H1 (cell line): ENCODE measurements at regions of chr7 and their contacts with region 1.

Region 1: DNA sequence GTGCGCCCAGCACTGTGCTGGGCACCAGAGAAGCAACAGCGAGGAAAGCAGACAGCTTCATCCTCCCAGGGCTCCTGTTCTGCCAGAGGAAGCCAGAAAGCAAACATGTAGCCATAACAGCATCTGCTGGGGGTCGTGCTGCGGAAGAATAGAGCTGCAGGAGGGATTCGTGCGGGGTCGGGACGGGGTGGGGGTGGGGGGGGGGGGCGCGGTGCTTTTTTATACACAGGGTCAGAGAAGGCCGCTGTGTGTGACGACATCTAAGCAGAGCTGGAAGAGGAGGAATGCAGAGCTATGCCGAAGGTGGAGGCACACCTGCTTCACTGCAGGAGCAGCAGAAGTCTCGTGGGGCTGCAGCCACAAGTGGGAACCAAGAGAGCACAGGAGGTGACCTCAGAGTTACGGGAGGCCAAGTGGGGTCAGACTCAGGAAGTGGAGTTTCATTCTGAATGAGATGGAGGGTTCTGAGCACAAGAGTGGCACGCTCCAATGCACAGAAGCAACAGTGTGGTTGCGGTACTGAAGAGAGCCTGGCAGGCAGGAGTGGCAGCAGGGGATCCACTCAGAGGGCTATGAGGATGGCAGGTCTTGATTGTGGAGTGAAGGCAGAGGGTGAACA is 11.1 kb downstream of the PKD1L1 start:
- DNase-seq: no peak
- H3K4me3 ChIP-seq: no peak overlapping the region
- H3K27ac ChIP-seq: no peak overlapping the region
- H3K4me1 ChIP-seq: peaks cover 0 to 9% (median 5%) of the 10 kb centered on the region in 4 experiments; a peak in 6 of 7 replicates
- H3K27me3 ChIP-seq: no peaks in the 10 kb centered on the region
- CTCF ChIP-seq: no peak
- EP300 ChIP-seq: no peak
- POLR2A ChIP-seq: no peak
- RAD21 ChIP-seq: no peak

Region 2: DNA sequence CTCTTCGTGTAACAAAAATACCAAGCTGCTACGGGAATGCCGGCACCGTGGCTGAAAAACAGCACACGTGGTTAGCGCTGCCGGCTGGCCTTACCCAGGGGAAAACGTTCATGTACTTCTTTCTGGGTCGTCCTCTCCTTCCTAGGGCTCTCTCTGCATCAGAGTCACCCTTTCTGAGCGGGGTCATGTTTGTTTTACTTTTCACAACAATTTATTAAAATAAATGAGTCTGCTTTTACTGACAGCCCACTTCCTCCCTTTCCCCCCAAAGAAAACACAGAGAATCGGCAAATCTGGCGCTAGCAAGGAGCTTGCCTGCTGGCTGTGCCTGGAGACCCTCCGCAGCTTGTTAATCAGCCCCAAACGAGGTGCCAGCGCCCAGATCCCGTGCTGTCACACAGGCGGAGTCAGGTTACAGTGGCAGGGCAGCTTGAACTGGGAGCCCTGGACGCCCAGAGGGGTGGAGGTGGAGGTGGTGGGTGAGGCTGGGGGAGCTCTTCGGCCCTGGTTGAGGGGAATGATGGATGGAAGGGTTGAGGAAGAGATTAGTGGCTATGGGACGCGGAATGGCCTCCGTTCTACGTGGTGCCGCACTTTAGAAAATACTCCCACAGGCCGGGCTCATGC is 193.1 kb before region 1 on chr7:
- CTCF ChIA-PET with region 1: no interaction called
- POLR2A ChIA-PET with region 1: no interaction called
- DNase-seq: peak in 1 of 2 experiments; percentile 67
- H3K4me3 ChIP-seq: peak overlapping the region in 1 of 4 experiments; percentile 33; a peak in 1 of 8 replicates
- H3K27ac ChIP-seq: no peak overlapping the region
- H3K4me1 ChIP-seq: peaks cover 0 to 10% (median 6%) of the 10 kb centered on the region in 4 experiments; a peak in 5 of 7 replicates
- H3K27me3 ChIP-seq: no peaks in the 10 kb centered on the region
- CTCF ChIP-seq: no peak
- EP300 ChIP-seq: no peak
- POLR2A ChIP-seq: no peak
- RAD21 ChIP-seq: no peak

Region 3: GRCh38 chr7:47852330-47853245 is 84.6 kb before region 1 on chr7:
- CTCF ChIA-PET with region 1: interaction called, 28 read pairs
- POLR2A ChIA-PET with region 1: no interaction called
- DNase-seq: peak in 1 of 2 experiments; percentile 52
- H3K4me3 ChIP-seq: no peak overlapping the region
- H3K27ac ChIP-seq: no peak overlapping the region
- H3K4me1 ChIP-seq: no peaks in the 10 kb centered on the region
- H3K27me3 ChIP-seq: no peaks in the 10 kb centered on the region
- CTCF ChIP-seq: peak; percentile 65 to 79 (median 73)
- EP300 ChIP-seq: no peak
- POLR2A ChIP-seq: no peak
- RAD21 ChIP-seq: peak; percentile 82 to 84

Region 4: DNA sequence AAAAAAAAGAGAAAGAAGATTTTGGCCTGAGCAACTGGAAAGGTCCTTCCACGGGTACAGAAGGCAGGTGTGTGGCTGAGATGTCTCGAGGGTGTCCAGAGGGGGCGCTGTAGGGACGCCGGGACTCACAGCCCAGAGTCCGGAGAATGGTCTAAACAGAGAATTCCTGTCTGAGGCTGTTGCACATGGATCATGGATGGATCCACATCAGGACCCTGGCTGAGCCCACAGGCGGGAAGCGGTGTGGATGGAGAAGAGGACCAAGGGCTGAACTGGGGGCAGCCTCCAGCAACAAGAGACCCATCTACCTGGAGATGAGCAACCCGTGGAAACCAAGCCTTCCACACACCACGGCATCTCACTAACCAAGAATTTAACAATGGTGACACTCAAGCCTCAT is 43.9 kb before region 1 on chr7:
- CTCF ChIA-PET with region 1: interaction called, 16 read pairs
- POLR2A ChIA-PET with region 1: no interaction called
- DNase-seq: peak; percentile 19 to 84
- H3K4me3 ChIP-seq: no peak overlapping the region
- H3K27ac ChIP-seq: no peak overlapping the region
- H3K4me1 ChIP-seq: peaks cover 2 to 11% (median 8%) of the 10 kb centered on the region in 4 experiments; a peak in 4 of 7 replicates
- H3K27me3 ChIP-seq: peaks cover 0 to 9% (median 1%) of the 10 kb centered on the region in 4 experiments; a peak in 3 of 7 replicates
- CTCF ChIP-seq: peak; percentile 70 to 87 (median 81)
- EP300 ChIP-seq: no peak
- POLR2A ChIP-seq: no peak
- RAD21 ChIP-seq: peak; percentile 59 to 72

Region 5: DNA sequence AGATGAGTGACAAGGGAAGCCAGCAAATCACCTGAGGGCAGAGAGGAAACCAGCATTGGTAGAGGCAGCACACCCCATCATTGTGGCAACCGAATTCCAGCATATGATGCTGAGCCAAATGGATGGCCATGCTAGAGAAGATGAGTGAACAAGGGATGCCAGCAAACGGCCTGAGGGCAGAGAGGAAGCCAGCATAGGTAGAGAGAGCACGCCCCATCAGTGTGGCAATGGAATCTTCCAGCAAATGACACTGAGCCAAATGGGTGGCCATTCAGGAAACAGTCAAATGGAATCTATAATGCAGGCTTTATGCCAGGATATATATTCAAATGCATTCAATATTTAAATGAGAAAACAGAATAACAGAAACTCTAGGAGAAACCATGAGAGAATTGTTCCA is 10.5 kb before region 1 on chr7:
- CTCF ChIA-PET with region 1: interaction called, 22 read pairs
- POLR2A ChIA-PET with region 1: interaction called, 3 read pairs
- DNase-seq: no peak
- H3K4me3 ChIP-seq: no peak overlapping the region
- H3K27ac ChIP-seq: no peak overlapping the region
- H3K4me1 ChIP-seq: no peaks in the 10 kb centered on the region
- H3K27me3 ChIP-seq: no peaks in the 10 kb centered on the region
- CTCF ChIP-seq: no peak
- EP300 ChIP-seq: no peak
- POLR2A ChIP-seq: no peak
- RAD21 ChIP-seq: no peak

Region 6: DNA sequence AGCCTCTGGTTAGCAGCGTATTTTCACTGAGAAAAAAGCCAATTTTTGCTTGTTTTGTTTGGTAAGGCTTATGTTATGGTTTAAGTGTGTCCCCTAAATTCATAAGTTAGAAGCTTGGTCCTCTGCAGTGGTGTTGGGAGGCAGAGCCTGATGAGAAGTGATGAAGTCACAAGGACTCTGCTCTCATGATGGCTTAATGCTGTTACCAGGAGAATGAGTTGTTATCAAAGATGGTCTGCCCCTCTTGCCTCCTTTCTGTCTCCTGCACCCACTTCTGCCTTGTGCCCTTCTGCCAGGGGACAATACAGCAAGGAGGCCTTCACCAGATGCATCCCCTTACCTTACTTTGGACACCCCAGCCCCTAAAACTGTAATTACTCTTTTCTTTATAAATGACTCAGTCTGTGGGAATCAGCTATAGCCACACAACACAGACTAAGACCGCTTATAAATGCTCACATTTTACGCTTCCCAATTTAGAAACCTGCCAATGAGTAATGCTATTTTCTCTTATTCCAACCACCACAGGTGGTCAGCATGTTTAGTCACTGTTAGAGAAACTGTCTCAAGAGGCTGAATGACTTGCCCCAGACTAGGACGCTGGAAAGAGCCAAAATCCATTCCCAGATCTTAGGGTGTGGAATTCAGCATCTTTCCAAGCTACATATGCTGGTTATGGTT is 17.2 kb after region 1 on chr7:
- CTCF ChIA-PET with region 1: interaction called, 34 read pairs
- POLR2A ChIA-PET with region 1: no interaction called
- DNase-seq: no peak
- H3K4me3 ChIP-seq: no peak overlapping the region
- H3K27ac ChIP-seq: no peak overlapping the region
- H3K4me1 ChIP-seq: peaks cover 0 to 4% (median 1%) of the 10 kb centered on the region in 4 experiments; a peak in 4 of 7 replicates
- H3K27me3 ChIP-seq: no peaks in the 10 kb centered on the region
- CTCF ChIP-seq: no peak
- EP300 ChIP-seq: no peak
- POLR2A ChIP-seq: no peak
- RAD21 ChIP-seq: no peak

Region 7: DNA sequence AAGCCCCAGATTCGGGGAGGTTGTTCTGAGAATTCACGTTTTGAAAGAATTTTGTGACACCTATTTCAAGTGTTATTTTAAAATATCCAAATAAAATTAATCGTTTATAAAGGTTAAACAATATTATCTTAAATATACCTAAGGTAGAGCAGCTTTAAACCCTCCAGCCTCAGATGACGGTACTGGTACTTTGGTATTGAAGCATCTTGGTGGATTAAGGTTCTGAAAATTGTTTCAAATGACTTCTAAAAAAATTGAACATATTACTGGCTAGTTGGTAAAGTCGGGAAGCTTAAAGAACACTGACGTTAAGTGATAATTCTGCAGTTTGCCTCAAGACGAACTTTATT is 42.6 kb after region 1 on chr7:
- CTCF ChIA-PET with region 1: no interaction called
- POLR2A ChIA-PET with region 1: no interaction called
- DNase-seq: no peak
- H3K4me3 ChIP-seq: peak overlapping the region; percentile 3 to 80 (median 46); a peak in 5 of 8 replicates
- H3K27ac ChIP-seq: no peak overlapping the region
- H3K4me1 ChIP-seq: peaks cover 0 to 4% (median 3%) of the 10 kb centered on the region in 4 experiments; a peak in 3 of 7 replicates
- H3K27me3 ChIP-seq: no peaks in the 10 kb centered on the region
- CTCF ChIP-seq: no peak
- EP300 ChIP-seq: no peak
- POLR2A ChIP-seq: no peak
- RAD21 ChIP-seq: no peak

Region 8: DNA sequence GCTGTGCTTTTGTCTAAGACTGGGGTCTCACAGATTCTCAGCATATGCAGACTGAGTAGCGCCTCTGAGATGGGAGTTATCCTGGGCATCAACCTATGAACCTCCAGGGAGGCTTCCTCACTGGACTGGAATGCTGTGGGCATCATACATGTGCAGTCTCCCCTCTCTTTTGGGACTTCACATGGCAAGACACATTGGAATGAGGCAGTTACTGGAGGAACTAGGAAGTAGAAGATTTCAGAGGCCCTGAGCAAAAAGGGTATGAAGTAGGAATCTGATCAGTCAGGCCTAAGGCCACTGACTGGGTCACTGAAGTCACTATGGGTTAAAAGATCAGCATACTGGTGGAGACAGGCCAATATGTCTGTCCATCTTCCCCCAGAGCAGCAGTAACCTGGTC is 78.1 kb after region 1 on chr7:
- CTCF ChIA-PET with region 1: no interaction called
- POLR2A ChIA-PET with region 1: no interaction called
- DNase-seq: no peak
- H3K4me3 ChIP-seq: no peak overlapping the region
- H3K27ac ChIP-seq: no peak overlapping the region
- H3K4me1 ChIP-seq: no peaks in the 10 kb centered on the region
- H3K27me3 ChIP-seq: no peaks in the 10 kb centered on the region
- CTCF ChIP-seq: no peak
- EP300 ChIP-seq: no peak
- POLR2A ChIP-seq: no peak
- RAD21 ChIP-seq: no peak